H1 (cell line): ENCODE measurements at regions of chr14 and their contacts with region 1.

Region 1: GRCh38 chr14:81464247-81465002 is 64.3 kb upstream of the STON2 start:
- DNase-seq: peak; percentile 9 to 80
- H3K4me3 ChIP-seq: peak overlapping the region; percentile 9 to 51 (median 30); a peak in 5 of 8 replicates
- H3K27ac ChIP-seq: no peak overlapping the region
- H3K4me1 ChIP-seq: no peaks in the 10 kb centered on the region
- H3K27me3 ChIP-seq: no peaks in the 10 kb centered on the region
- CTCF ChIP-seq: peak in 2 of 3 experiments; percentile 77 to 83; a peak in 3 of 4 replicates
- EP300 ChIP-seq: no peak
- POLR2A ChIP-seq: no peak
- RAD21 ChIP-seq: peak; percentile 94 to 95

Region 2: GRCh38 chr14:81122326-81122725 is 342.1 kb before region 1 on chr14:
- CTCF ChIA-PET with region 1: no interaction called
- POLR2A ChIA-PET with region 1: no interaction called
- DNase-seq: no peak
- H3K4me3 ChIP-seq: no peak overlapping the region
- H3K27ac ChIP-seq: no peak overlapping the region
- H3K4me1 ChIP-seq: no peaks in the 10 kb centered on the region
- H3K27me3 ChIP-seq: no peaks in the 10 kb centered on the region
- CTCF ChIP-seq: no peak
- EP300 ChIP-seq: no peak
- POLR2A ChIP-seq: no peak
- RAD21 ChIP-seq: no peak

Region 3: DNA sequence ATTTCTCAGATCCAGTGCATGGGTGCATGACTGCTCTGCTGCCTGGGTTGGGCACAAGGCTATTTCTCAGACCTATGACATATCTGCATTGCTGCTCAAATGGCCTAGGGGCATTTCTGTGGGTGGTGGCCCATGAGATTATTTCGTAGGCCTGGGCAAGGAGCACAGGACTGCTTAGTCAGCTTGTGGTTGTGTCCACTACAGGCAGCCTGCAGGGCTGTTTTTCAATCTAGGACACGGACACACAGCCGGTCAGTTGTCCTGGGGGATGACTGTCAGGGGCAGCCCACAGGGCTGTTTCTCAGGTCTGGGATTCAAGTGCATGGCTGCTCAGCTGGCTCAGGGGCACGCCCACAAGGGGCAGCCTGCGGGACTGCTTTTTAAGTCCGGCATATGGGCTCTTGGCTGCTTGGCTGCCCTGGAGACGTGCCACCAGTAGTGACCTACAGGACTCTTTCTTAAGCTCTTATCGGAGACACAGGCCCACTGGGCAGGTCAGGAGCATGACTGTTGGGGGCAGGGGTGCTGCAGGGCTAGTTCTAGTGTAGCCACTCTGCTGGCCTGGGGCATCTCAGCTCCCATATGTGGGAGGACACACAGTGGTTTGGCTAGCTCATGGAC is 217.2 kb before region 1 on chr14:
- CTCF ChIA-PET with region 1: interaction called, 14 read pairs
- POLR2A ChIA-PET with region 1: no interaction called
- DNase-seq: no peak
- H3K4me3 ChIP-seq: no peak overlapping the region
- H3K27ac ChIP-seq: no peak overlapping the region
- H3K4me1 ChIP-seq: no peaks in the 10 kb centered on the region
- H3K27me3 ChIP-seq: no peaks in the 10 kb centered on the region
- CTCF ChIP-seq: no peak
- EP300 ChIP-seq: no peak
- POLR2A ChIP-seq: no peak
- RAD21 ChIP-seq: no peak

Region 4: DNA sequence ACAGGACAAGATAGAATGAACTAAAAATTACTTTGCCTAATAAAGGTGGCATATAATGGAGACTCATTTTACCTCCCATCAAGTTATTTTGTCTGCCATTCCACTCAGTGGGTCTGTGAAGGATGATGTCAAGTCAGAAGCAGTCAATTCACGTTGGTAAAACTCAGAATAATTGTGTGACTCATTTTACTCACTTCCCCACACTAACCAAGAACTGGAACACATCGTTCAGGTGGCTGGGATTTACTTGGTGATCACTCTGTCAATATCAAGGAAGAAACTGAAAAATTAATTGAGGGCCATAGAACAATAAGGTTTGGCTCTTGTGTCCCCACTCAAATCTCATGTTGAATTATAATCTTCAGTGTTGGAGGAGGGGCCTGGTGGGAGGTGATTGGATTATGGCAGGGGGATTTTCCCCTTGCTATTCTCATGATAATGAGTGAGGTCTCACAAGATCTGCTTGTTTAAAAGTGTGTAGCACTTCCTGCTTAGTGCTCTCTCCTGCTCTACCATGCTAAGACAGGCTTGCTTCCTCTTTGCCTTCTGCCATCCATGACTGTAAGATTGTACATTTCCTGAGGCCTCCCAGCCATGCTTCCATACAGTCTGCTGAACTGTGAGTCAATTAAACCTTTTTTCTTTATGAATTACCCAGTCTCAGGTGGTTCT is 208.0 kb before region 1 on chr14:
- CTCF ChIA-PET with region 1: interaction called, 426 read pairs
- POLR2A ChIA-PET with region 1: no interaction called
- DNase-seq: no peak
- H3K4me3 ChIP-seq: no peak overlapping the region
- H3K27ac ChIP-seq: no peak overlapping the region
- H3K4me1 ChIP-seq: peaks cover 0 to 4% (median 1%) of the 10 kb centered on the region in 4 experiments; a peak in 1 of 7 replicates
- H3K27me3 ChIP-seq: no peaks in the 10 kb centered on the region
- CTCF ChIP-seq: no peak
- EP300 ChIP-seq: no peak
- POLR2A ChIP-seq: no peak
- RAD21 ChIP-seq: no peak

Region 5: GRCh38 chr14:81276073-81277069 is 188.1 kb before region 1 on chr14:
- CTCF ChIA-PET with region 1: interaction called, 426 read pairs
- POLR2A ChIA-PET with region 1: no interaction called
- DNase-seq: no peak
- H3K4me3 ChIP-seq: no peak overlapping the region
- H3K27ac ChIP-seq: no peak overlapping the region
- H3K4me1 ChIP-seq: peaks cover 0 to 3% (median 0%) of the 10 kb centered on the region in 4 experiments; a peak in 2 of 7 replicates
- H3K27me3 ChIP-seq: no peaks in the 10 kb centered on the region
- CTCF ChIP-seq: no peak
- EP300 ChIP-seq: no peak
- POLR2A ChIP-seq: no peak
- RAD21 ChIP-seq: no peak

Region 6: DNA sequence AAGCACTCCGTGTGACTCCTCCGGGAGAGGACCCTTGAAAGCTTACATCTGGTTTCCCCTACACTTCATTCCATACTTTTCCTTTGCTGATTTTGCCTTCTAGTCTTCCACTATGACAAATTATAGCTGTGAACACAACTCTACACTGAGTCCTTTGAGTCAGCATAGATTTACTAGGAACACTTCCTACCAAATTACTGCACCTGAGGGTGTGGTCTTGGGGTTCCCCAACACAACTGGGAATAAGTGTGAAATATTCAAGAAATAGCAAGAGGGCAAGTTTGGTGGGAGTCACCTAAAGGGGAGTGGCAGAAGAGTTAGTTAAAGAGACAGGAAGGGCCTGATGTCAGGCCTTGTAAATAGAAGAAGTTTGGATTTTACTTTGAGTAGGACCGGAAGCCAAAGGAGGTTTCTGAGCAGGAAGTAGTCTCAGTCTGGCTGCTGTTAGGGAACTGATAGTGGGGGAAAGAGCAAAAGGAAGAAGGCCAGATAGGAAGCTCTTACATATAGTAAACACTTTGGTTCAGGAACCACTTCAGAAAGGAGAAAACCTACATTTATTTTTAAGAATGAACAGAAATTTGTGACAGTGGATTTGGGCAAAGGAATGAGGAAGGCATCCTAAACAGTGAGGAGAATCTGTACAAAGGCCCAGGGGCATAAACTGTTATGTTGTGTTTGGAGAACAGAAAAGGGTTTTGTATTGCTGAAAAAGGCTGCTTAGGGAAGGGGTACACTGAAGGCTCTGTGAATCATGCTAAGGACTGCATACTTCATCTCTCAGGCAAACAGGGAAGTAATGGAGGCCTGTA is 55.0 kb after region 1 on chr14:
- CTCF ChIA-PET with region 1: no interaction called
- POLR2A ChIA-PET with region 1: no interaction called
- DNase-seq: no peak
- H3K4me3 ChIP-seq: no peak overlapping the region
- H3K27ac ChIP-seq: no peak overlapping the region
- H3K4me1 ChIP-seq: peaks cover 0 to 2% (median 0%) of the 10 kb centered on the region in 4 experiments; a peak in 1 of 7 replicates
- H3K27me3 ChIP-seq: no peaks in the 10 kb centered on the region
- CTCF ChIP-seq: no peak
- EP300 ChIP-seq: no peak
- POLR2A ChIP-seq: no peak
- RAD21 ChIP-seq: no peak